Activated CD4-positive, alpha-beta T cell treated with anti-CD3 and anti-CD28 coated beads, Interleukin-2, amount 10 ng/mL, durations not matched to agents 7 days and 5 days (primary cell): ENCODE measurements at regions of chr2 and their contacts with region 1.

Region 1: GRCh38 chr2:54558188-54559005 is 102.3 kb downstream of the SPTBN1 start:
- DNase-seq: peak; percentile 77
- H3K4me3 Mint-ChIP-seq: peak overlapping the region; percentile 98
- H3K27ac Mint-ChIP-seq: peak overlapping the region; percentile 92
- H3K4me1 Mint-ChIP-seq: peaks cover 40% of the 10 kb centered on the region
- H3K27me3 Mint-ChIP-seq: peaks cover 2% of the 10 kb centered on the region

Region 2: GRCh38 chr2:54459037-54459441 is 99.4 kb before region 1 on chr2:
- CTCF ChIA-PET with region 1: no interaction called
- POLR2A ChIA-PET with region 1: no interaction called
- DNase-seq: no peak
- H3K4me3 Mint-ChIP-seq: no peak overlapping the region
- H3K27ac Mint-ChIP-seq: no peak overlapping the region
- H3K4me1 Mint-ChIP-seq: peaks cover 14% of the 10 kb centered on the region
- H3K27me3 Mint-ChIP-seq: peaks cover 65% of the 10 kb centered on the region

Region 3: GRCh38 chr2:54546923-54547720 is 11.3 kb before region 1 on chr2:
- CTCF ChIA-PET with region 1: interaction called, 18 read pairs
- POLR2A ChIA-PET with region 1: no interaction called
- DNase-seq: no peak
- H3K4me3 Mint-ChIP-seq: no peak overlapping the region
- H3K27ac Mint-ChIP-seq: no peak overlapping the region
- H3K4me1 Mint-ChIP-seq: peaks cover 12% of the 10 kb centered on the region
- H3K27me3 Mint-ChIP-seq: no peaks in the 10 kb centered on the region

Region 4: GRCh38 chr2:54570925-54571694 is 12.7 kb after region 1 on chr2:
- CTCF ChIA-PET with region 1: interaction called, 13 read pairs
- POLR2A ChIA-PET with region 1: interaction called, 7 read pairs
- DNase-seq: peak; percentile 80
- H3K4me3 Mint-ChIP-seq: peak overlapping the region; percentile 69
- H3K27ac Mint-ChIP-seq: peak overlapping the region; percentile 94
- H3K4me1 Mint-ChIP-seq: peaks cover 92% of the 10 kb centered on the region
- H3K27me3 Mint-ChIP-seq: no peaks in the 10 kb centered on the region